Prostate gland (tissue), 2 donors: ENCODE measurements at regions of chr3 and their contacts with region 1.

Region 1: DNA sequence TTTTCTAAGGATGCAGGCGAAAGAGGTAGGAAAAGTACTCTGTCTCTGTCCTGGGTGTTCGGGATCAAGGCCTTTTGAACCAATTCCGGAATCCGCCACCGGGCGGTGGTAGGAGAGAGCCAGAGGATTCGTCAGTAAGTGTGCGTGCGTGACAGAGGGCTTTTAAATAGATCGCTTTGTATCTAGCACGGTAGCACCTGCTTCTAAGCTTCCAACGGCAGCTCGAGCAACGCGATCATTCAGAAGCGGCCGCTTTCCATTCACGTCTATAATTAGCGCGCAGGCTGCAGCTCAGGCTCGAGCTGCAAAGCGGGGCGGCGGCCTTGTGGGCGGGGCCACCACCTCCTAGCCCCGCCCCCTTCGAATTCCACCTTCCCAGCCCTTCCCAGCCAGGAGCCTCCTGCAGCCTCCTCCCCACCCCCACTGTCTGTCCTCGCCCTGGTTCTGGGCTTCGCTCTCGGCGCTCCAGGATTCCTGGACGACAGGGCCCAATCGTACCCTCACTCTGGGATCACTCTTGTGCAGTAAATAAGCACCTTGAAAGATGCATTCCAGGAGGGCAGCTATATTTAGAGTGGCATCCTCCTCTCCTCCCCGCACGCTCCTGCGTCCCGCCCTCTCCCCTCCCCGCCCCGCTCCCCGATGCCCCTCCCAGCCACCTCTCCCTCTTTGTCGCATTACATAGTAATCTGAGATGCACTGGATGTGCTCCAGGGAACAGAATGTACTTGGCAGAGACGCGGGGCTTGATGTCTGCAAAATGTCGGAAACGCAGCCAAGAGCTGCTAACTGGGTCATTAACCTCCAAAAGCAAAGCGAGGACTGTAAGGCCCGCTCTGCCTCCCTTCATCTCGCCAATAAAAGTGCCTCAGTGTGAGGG is 224.1 kb upstream of the TPRG1 start:
- DNase-seq: peak; percentile 99
- H3K4me3 ChIP-seq: peak overlapping the region; percentile 24 to 30
- H3K27ac ChIP-seq: peak overlapping the region; percentile 90
- H3K4me1 ChIP-seq: peaks cover 9% of the 10 kb centered on the region
- H3K27me3 ChIP-seq: no peaks in the 10 kb centered on the region
- CTCF ChIP-seq: peak in 2 of 4 experiments; percentile 52 to 61
- POLR2A ChIP-seq: peak; percentile 45

Region 2: GRCh38 chr3:188154014-188154808 is 793.4 kb before region 1 on chr3 and contains the start of gene LPP:
- intact Hi-C with region 1: loop called (anchors 5 kb)
- DNase-seq: peak; percentile 73
- H3K4me3 ChIP-seq: peak within 1 kb of the TSS; percentile 59 to 81
- H3K27ac ChIP-seq: peak within 1 kb of the TSS; percentile 91 to 93
- H3K4me1 ChIP-seq: peaks cover 11% of the 10 kb centered on the region
- H3K27me3 ChIP-seq: no peaks in the 10 kb centered on the region
- CTCF ChIP-seq: peak in 1 of 4 experiments; percentile 10
- POLR2A ChIP-seq: peak; percentile 14
- total RNA-seq, gene LPP: 219 to 248 TPM

Region 3: DNA sequence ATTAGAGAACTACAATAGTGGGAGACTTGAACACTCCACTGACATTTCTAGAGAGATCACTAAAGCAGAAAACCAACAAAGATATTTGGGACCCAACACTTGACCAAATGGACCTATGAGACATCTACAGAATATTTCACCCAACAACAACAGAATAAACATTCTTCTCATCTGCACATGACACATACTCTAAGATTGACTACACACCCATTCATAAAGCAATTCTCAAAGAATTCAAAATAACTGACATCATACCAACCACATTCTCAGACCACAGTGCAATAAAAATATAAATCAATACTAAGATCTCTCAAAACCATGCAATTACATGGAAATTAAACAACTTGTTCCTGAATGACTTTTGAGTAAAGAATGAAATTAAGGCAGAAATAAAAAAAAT is 320.0 kb before region 1 on chr3:
- intact Hi-C with region 1: loop called (anchors 10 kb)
- DNase-seq: no peak
- H3K4me3 ChIP-seq: no peak overlapping the region
- H3K27ac ChIP-seq: no peak overlapping the region
- H3K4me1 ChIP-seq: no peaks in the 10 kb centered on the region
- H3K27me3 ChIP-seq: no peaks in the 10 kb centered on the region
- CTCF ChIP-seq: no peak
- POLR2A ChIP-seq: no peak